Ascending aorta (tissue), 2 donors: ENCODE measurements at regions of chrX and their contacts with region 1.

Region 1: GRCh38 chrX:101931488-101932248 is at the start of gene ZMAT1:
- DNase-seq: peak; percentile 82 to 97
- H3K4me3 ChIP-seq: peak within 1 kb of the TSS; percentile 56 to 87
- H3K27ac ChIP-seq: peak within 1 kb of the TSS; percentile 96 to 99
- H3K4me1 ChIP-seq: no peaks in the 10 kb centered on the region
- H3K27me3 ChIP-seq: no peaks in the 10 kb centered on the region
- CTCF ChIP-seq: no peak
- total RNA-seq, gene ZMAT1: 0.96 TPM

Region 2: DNA sequence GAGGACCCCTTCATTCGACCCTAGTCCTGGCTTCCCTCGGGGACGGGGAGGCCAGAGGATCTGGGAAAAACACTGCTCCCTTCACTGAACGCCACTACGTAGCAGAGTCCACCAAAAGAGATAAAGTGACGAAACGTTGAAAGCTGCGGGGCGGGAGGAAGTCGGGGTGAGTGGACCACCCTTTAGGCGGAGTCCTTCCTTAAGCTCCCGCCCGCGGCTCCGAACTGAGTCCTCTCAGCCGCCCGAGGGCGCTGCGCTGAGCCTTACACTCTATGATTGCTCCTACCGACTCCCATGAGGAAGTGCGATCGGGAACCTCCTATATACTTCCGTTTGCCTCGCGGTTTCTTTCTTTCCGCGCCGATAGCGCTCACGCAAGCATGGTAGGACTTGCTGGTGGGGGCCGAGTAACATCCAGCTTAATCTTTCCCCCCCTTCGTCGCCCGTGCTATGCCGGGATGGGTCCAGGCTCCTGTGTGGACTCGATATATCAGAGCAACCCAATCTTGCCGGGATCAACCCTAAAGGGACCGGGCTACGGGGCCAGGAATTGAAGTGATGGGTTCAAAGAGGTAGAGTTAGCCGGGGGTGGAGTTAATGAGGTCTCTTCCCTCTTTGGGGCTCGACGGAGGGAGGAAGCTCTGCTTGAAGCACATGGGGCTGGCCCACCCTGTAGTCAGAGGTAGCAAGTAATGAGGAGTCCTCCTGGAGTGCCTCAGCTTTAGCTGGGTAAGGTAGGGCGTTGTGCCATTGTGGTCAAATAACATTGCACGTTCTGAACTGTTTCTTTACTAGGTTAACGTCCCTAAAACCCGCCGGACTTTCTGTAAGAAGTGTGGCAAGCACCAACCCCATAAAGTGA is 540.8 kb before region 1 on chrX and contains the start of gene RPL36A:
- intact Hi-C with region 1: loop called (anchors 5 kb)
- DNase-seq: peak; percentile 35 to 90
- H3K4me3 ChIP-seq: peak within 1 kb of the TSS; percentile 50 to 63
- H3K27ac ChIP-seq: peak within 1 kb of the TSS; percentile 61 to 75
- H3K4me1 ChIP-seq: no peaks in the 10 kb centered on the region
- H3K27me3 ChIP-seq: no peaks in the 10 kb centered on the region
- CTCF ChIP-seq: peak; percentile 46 to 63 (median 50)
- total RNA-seq, gene RPL36A: 822 TPM

Region 3: DNA sequence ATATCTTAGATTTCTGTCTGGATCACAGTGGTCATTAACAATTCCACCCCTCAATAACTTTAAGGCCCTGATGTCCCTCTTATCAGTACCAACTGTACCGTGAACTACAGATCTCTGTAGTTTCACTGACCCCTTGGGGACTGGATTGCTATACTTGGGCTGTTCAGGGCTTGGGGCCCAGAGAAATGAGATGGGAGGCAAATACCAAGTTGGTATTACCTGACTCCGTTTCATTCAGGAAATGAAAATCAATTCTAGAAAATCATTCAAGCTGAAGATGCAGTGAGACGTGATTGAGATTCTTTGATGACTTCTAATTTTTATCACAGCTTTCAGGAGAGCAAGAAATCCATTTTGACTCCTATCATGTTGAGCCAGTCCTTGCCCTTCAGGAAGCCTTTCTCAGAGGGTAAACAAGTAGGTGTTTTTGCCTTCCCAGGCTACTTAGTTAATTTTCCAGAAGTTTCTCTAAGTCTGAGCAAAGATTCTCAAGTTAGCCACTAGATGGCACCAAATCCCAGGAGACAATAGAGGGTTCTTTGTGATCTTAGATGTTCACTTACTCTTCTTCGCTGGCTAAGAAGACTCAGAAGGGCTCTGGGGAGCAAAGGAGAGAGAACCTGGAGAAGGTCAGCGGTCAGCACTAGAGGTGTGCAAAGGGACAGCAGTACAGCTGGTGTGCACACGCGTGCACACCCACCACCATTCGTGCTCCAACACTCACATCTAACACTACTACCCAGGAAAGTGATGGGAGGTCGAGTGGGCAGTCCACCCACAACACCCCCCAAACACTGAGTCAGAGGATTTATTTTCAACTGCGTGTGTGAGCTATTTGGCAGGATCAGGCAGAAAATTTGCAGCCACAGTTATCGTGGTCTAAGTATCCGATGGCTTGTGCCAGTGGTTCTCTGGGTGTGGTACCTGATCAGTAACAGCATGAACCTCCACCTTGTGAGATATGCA is 516.2 kb before region 1 on chrX:
- intact Hi-C with region 1: loop called (anchors 5 kb)
- DNase-seq: no peak
- H3K4me3 ChIP-seq: no peak overlapping the region
- H3K27ac ChIP-seq: peak overlapping the region; percentile 54 to 63
- H3K4me1 ChIP-seq: peaks cover 0 to 4% of the 10 kb centered on the region in 2 donors
- H3K27me3 ChIP-seq: no peaks in the 10 kb centered on the region
- CTCF ChIP-seq: peak; percentile 60 to 82 (median 77)

Region 4: DNA sequence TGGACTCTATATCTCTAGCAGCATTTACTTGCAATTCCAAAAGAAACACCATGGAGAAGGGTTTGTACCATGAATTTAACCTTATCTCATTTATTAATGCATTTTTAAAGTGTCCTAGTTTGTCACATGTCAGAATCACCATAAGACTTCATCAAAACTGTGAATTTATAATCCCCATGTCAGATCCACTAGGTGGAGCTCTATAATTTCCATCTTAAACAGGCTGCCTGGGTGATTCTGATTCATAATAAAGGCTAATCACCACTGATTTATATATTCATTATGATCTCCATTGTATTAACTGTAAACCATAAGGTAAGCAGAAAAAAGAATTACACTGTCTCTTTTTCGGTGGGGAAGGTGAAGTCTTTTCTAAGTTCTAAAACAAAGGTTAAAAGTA is 197.8 kb after region 1 on chrX:
- intact Hi-C with region 1: loop called (anchors 10 kb)
- DNase-seq: no peak
- H3K4me3 ChIP-seq: no peak overlapping the region
- H3K27ac ChIP-seq: no peak overlapping the region
- H3K4me1 ChIP-seq: no peaks in the 10 kb centered on the region
- H3K27me3 ChIP-seq: no peaks in the 10 kb centered on the region
- CTCF ChIP-seq: peak in 2 of 3 experiments; percentile 26 to 37

Region 5: GRCh38 chrX:103151799-103152198 is 1220.1 kb after region 1 on chrX:
- intact Hi-C with region 1: loop called (anchors 5 kb)
- DNase-seq: no peak
- H3K4me3 ChIP-seq: no peak overlapping the region
- H3K27ac ChIP-seq: no peak overlapping the region
- H3K4me1 ChIP-seq: peaks cover 0 to 3% of the 10 kb centered on the region in 2 donors
- H3K27me3 ChIP-seq: no peaks in the 10 kb centered on the region
- CTCF ChIP-seq: no peak